Endothelial cell of umbilical vein (primary cell): ENCODE measurements at regions of chr10 and their contacts with region 1.

Region 1: DNA sequence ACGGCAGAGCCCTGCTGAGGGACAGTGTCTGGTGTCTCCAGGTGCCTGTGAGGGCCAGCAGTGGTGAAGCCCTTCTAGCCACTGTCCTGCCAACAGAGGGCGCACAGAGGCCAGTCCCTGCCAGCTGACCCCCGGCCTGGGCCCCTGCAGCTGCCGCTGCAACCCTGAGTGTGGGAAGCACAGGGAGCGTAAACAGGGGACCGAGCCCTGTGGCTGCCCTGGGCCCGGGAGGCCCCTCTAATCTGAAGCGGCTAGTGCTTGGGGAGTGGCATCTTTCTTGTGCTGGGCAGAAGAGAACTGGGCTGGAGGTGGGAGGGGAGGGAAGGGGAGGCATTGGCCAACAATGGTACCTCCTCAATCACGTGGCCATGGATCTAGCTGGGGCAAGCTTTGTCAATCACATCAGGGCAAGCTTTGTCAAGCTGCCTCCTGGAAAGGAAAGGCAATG is 34.6 kb downstream of the TRIM8 start:
- DNase-seq: peak; percentile 68
- H3K4me3 ChIP-seq: no peak overlapping the region
- H3K27ac ChIP-seq: no peak overlapping the region
- H3K4me1 ChIP-seq: peaks cover under 1% of the 10 kb centered on the region
- H3K27me3 ChIP-seq: no peaks in the 10 kb centered on the region
- CTCF ChIP-seq: peak; percentile 77 to 94
- POLR2A ChIP-seq: no peak

Region 2: GRCh38 chr10:102660888-102661657 is 17.8 kb before region 1 on chr10:
- CTCF ChIA-PET with region 1: interaction called, 10 read pairs
- POLR2A ChIA-PET with region 1: no interaction called
- dilution Hi-C with region 1: no loop called
- intact Hi-C with region 1: no loop called
- DNase-seq: no peak
- H3K4me3 ChIP-seq: no peak overlapping the region
- H3K27ac ChIP-seq: no peak overlapping the region
- H3K4me1 ChIP-seq: peaks cover 18% of the 10 kb centered on the region
- H3K27me3 ChIP-seq: no peaks in the 10 kb centered on the region
- CTCF ChIP-seq: no peak
- POLR2A ChIP-seq: no peak

Region 3: GRCh38 chr10:102713814-102714620 is 35.2 kb after region 1 on chr10 and contains the start of gene ARL3:
- CTCF ChIA-PET with region 1: interaction called, 75 read pairs
- POLR2A ChIA-PET with region 1: no interaction called
- dilution Hi-C with region 1: no loop called
- intact Hi-C with region 1: loop called (anchors 2 kb)
- DNase-seq: peak; percentile 99
- H3K4me3 ChIP-seq: peak within 1 kb of the TSS; percentile 64 to 85 (median 85)
- H3K27ac ChIP-seq: peak within 1 kb of the TSS; percentile 38
- H3K4me1 ChIP-seq: peaks cover 23% of the 10 kb centered on the region
- H3K27me3 ChIP-seq: no peaks in the 10 kb centered on the region
- CTCF ChIP-seq: peak; percentile 39 to 78
- POLR2A ChIP-seq: peak; percentile 76
- total RNA-seq, gene ARL3: 10.6 and 11.0 TPM in 2 replicates

Region 4: DNA sequence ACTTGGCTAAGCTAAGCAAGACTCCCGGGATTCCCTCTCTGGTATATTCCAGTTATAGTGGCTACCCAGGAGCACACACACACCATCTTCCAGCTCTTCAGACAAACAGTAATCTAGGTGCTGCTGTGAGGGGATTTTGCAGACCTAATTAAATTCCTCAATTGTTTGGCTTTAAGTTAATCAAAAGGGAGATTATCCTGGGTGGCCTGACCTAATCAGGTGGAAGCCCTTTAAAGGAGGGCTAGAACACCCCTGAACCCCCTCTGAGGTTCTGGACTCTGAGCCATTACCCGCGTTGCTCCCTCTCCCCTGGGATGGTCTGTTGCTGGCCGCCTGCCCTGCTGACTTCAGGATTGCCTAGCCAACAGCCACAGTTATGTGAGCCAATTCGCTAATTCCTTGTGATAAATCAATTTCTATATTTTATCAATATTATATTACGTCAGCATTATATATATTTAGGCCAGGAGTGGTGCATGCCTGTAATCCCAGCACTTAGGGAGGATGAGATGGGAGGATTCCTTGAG is 42.0 kb after region 1 on chr10:
- CTCF ChIA-PET with region 1: interaction called, 14 read pairs
- POLR2A ChIA-PET with region 1: no interaction called
- dilution Hi-C with region 1: no loop called
- intact Hi-C with region 1: no loop called
- DNase-seq: no peak
- H3K4me3 ChIP-seq: no peak overlapping the region
- H3K27ac ChIP-seq: no peak overlapping the region
- H3K4me1 ChIP-seq: peaks cover 5% of the 10 kb centered on the region
- H3K27me3 ChIP-seq: no peaks in the 10 kb centered on the region
- CTCF ChIP-seq: no peak
- POLR2A ChIP-seq: no peak

Region 5: DNA sequence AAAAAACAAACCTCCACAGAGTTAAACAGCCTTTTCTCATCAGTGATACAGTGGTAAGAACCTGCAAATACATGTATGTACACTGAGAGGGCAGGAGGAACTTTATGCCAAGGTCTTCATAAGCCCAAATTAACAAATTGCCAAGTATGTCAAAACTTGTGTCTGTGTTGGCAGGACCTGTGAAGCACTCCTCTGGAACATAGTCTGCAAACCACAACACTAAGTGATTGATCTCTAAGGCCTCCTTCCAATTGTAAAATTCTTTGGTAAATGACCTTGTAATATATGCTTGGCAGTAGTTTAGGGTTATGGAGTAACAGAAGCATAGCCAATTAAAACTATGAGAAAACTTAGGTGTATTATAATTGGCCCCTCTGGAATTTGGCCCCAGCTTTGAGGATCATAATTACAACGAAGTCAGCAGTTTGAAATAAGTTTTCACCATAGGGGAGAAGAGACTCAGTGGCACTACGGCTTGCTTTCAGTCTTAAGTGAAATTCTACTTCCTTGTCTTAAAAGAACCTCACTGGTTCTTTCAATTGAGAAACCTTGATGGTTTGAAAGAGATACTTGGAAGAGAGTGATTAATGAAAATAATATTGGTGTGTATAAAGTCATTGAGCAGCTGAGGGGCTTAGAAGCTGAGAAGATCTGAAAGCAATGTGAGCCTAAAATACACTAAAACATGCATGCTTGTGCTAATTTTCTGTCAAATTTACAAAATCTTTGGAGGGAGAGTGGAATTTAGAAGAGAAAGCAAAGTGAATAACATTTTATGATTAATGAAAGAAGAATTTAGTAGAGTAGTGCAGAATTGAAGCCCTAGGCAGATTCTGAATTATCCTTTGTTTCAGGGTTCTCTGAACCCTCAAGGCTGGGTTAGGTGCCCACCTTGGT is 296.9 kb after region 1 on chr10:
- CTCF ChIA-PET with region 1: no interaction called
- POLR2A ChIA-PET with region 1: no interaction called
- dilution Hi-C with region 1: no loop called
- intact Hi-C with region 1: no loop called
- DNase-seq: no peak
- H3K4me3 ChIP-seq: no peak overlapping the region
- H3K27ac ChIP-seq: no peak overlapping the region
- H3K4me1 ChIP-seq: no peaks in the 10 kb centered on the region
- H3K27me3 ChIP-seq: no peaks in the 10 kb centered on the region
- CTCF ChIP-seq: no peak
- POLR2A ChIP-seq: no peak